Adrenal gland (tissue), 19 donors: ENCODE measurements at regions of chr10 and their contacts with region 1.

Region 1: GRCh38 chr10:21959998-21960397 is 43.5 kb downstream of the DNAJC1 start:
- DNase-seq: no peak
- H3K4me3 ChIP-seq: no peak overlapping the region
- H3K27ac ChIP-seq: no peak overlapping the region
- H3K4me1 ChIP-seq: no peaks in the 10 kb centered on the region
- H3K27me3 ChIP-seq: no peaks in the 10 kb centered on the region
- CTCF ChIP-seq: no peak
- POLR2A ChIP-seq: no peak

Region 2: DNA sequence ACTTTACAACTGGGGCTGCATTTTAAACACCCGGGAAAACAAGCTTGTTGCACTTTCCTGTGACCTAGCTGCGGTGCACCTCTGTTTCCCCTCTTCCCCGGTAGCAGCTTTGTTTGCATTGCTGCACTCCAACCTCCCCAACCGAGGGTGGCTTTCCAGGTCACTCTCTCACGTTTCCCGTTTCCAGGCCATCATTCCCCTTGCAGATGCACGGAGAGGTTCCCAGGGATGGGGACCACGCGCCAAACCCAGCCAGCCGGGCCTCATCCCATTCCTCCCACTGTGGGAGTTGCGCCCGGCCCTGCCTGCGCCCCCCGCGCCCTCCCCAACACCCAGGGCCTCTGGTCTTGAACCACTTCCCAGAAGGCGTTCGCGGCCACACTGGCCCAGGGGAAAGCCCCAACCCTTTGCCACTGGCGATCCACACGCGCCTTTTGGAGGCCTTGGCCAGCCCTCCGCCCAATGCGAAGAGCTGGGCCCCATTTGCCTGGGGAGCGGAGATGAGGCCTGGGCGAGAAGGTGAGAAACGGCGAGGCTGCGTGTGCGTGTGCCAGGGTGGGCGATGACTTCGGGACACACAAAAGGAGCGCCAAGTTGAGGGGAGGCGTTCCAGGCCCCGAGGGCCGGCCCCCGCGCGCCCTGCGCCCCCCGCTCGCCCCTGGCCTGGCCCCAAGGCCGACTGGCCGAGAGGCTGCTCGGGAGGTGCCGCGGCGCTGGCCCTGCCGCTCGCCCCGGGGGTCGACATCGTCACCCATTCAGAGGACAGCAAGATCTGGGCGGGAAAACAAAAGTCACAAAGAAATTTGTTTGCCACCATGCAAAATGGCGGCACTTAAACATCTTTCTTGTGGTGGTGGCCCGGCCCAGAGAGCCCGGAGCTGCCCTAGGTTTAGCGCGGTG is 450.4 kb before region 1 on chr10:
- intact Hi-C with region 1: loop called in 1 of 2 experiments (anchors 5 kb)
- DNase-seq: no peak
- H3K4me3 ChIP-seq: peak overlapping the region in 2 of 4 donors; percentile 40 to 49
- H3K27ac ChIP-seq: no peak overlapping the region
- H3K4me1 ChIP-seq: peaks cover 0 to 5% of the 10 kb centered on the region in 2 donors
- H3K27me3 ChIP-seq: no peaks in the 10 kb centered on the region
- CTCF ChIP-seq: no peak
- POLR2A ChIP-seq: no peak